Activated CD8-positive, alpha-beta T cell treated with anti-CD3 and anti-CD28 coated beads for 36 hours (primary cell): ENCODE measurements at regions of chr18 and their contacts with region 1.

Region 1: GRCh38 chr18:25832001-25832604 is 258.3 kb downstream of the SS18 start:
- DNase-seq: peak; percentile 43
- ATAC-seq: no peak
- H3K4me3 Mint-ChIP-seq: no peak overlapping the region
- H3K27ac Mint-ChIP-seq: no peak overlapping the region
- H3K4me1 Mint-ChIP-seq: no peaks in the 10 kb centered on the region
- H3K27me3 Mint-ChIP-seq: peaks cover 3% of the 10 kb centered on the region
- CTCF ChIP-seq: peak; percentile 54

Region 2: GRCh38 chr18:25561918-25562317 is 270.2 kb before region 1 on chr18:
- CTCF ChIA-PET with region 1: no interaction called
- POLR2A ChIA-PET with region 1: no interaction called
- intact Hi-C with region 1: loop called (anchors 10 kb)
- DNase-seq: peak; percentile 4
- ATAC-seq: no peak
- H3K4me3 Mint-ChIP-seq: no peak overlapping the region
- H3K27ac Mint-ChIP-seq: no peak overlapping the region
- H3K4me1 Mint-ChIP-seq: no peaks in the 10 kb centered on the region
- H3K27me3 Mint-ChIP-seq: no peaks in the 10 kb centered on the region
- CTCF ChIP-seq: no peak

Region 3: DNA sequence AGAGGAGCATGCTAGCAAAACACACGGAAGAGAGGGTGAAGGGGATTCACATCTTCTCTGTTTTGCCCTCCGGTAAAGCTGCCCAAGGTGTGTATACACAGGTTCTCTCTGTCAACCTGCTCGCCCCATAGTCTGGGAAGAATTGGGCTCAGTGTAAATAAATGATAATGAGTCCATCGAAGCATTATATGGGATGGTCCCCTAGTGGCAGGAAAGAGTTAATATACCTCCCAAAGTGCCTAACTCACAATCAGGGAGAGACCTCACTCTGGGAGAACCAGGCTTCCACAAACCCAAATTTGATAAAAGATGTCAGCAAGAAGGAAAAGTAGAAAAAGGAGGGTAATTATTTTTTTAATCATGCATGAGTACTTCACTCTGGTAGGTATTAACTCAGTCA is 217.9 kb before region 1 on chr18:
- CTCF ChIA-PET with region 1: no interaction called
- POLR2A ChIA-PET with region 1: no interaction called
- intact Hi-C with region 1: no loop called
- DNase-seq: no peak
- ATAC-seq: no peak
- H3K4me3 Mint-ChIP-seq: no peak overlapping the region
- H3K27ac Mint-ChIP-seq: no peak overlapping the region
- H3K4me1 Mint-ChIP-seq: no peaks in the 10 kb centered on the region
- H3K27me3 Mint-ChIP-seq: no peaks in the 10 kb centered on the region
- CTCF ChIP-seq: no peak

Region 4: GRCh38 chr18:25805323-25805722 is 26.8 kb before region 1 on chr18:
- CTCF ChIA-PET with region 1: no interaction called
- POLR2A ChIA-PET with region 1: no interaction called
- intact Hi-C with region 1: no loop called
- DNase-seq: no peak
- ATAC-seq: no peak
- H3K4me3 Mint-ChIP-seq: no peak overlapping the region
- H3K27ac Mint-ChIP-seq: no peak overlapping the region
- H3K4me1 Mint-ChIP-seq: no peaks in the 10 kb centered on the region
- H3K27me3 Mint-ChIP-seq: peaks cover 7% of the 10 kb centered on the region
- CTCF ChIP-seq: no peak